CD4-positive, alpha-beta T cell (primary cell): ENCODE measurements at regions of chr11 and their contacts with region 1.

Region 1: GRCh38 chr11:120579611-120580031 is 68.1 kb downstream of the GRIK4 start:
- DNase-seq: no peak
- ATAC-seq: no peak
- H3K4me3 ChIP-seq: no peak overlapping the region
- H3K4me3 Mint-ChIP-seq: no peak overlapping the region
- H3K27ac ChIP-seq: no peak overlapping the region
- H3K27ac Mint-ChIP-seq: no peak overlapping the region
- H3K4me1 ChIP-seq: no peaks in the 10 kb centered on the region
- H3K4me1 Mint-ChIP-seq: no peaks in the 10 kb centered on the region
- H3K27me3 ChIP-seq: peaks cover 0 to 5% of the 10 kb centered on the region in 2 experiments
- H3K27me3 Mint-ChIP-seq: peaks cover 49% of the 10 kb centered on the region
- CTCF ChIP-seq: no peak

Region 2: DNA sequence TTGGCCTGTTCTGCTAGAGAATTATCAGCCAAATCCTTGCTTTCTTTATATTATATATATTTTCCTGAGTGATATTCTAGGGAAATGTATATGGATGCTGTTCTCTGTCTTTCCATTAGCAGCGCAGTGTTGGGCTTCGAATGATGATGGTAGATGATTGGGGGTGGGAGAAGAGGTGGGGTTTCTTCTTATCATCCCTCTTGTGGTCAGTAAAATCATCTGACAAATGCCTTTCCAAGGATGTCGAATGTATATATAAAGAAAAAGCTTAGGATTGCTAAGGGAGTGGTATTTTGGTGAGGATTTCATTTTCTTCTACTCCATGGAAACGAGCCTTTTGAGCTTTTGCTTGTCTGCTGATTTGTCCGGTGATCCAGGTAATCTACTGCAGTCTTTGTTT is 194.5 kb before region 1 on chr11:
- CTCF ChIA-PET with region 1: no interaction called
- POLR2A ChIA-PET with region 1: no interaction called
- intact Hi-C with region 1: loop called in 1 of 2 experiments (anchors 10 kb)
- DNase-seq: no peak
- ATAC-seq: no peak
- H3K4me3 ChIP-seq: no peak overlapping the region
- H3K4me3 Mint-ChIP-seq: no peak overlapping the region
- H3K27ac ChIP-seq: no peak overlapping the region
- H3K27ac Mint-ChIP-seq: no peak overlapping the region
- H3K4me1 ChIP-seq: no peaks in the 10 kb centered on the region
- H3K4me1 Mint-ChIP-seq: no peaks in the 10 kb centered on the region
- H3K27me3 ChIP-seq: peaks cover 0 to 25% of the 10 kb centered on the region in 2 experiments
- H3K27me3 Mint-ChIP-seq: peaks cover 80% of the 10 kb centered on the region
- CTCF ChIP-seq: no peak

Region 3: DNA sequence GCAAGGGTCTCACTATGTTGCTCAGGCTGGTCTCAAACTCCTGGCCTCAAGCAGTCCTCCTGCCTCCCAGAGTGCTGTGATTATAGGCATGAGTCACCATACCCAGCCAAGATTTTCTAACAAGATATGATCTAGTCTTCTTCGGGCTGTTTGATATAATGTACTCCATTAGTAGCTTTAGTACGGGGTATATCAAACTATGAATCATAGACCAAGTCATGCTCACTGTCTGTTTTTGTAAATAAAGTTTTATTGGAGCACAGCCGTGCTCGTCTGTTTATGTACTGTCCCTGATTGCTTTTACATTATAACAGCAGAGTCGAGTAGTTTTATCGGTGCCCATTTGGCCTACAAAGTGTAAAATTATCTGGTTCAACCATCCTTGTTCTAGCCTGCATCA is 112.0 kb before region 1 on chr11:
- CTCF ChIA-PET with region 1: no interaction called
- POLR2A ChIA-PET with region 1: no interaction called
- intact Hi-C with region 1: no loop called
- DNase-seq: no peak
- ATAC-seq: no peak
- H3K4me3 ChIP-seq: no peak overlapping the region
- H3K4me3 Mint-ChIP-seq: no peak overlapping the region
- H3K27ac ChIP-seq: no peak overlapping the region
- H3K27ac Mint-ChIP-seq: no peak overlapping the region
- H3K4me1 ChIP-seq: no peaks in the 10 kb centered on the region
- H3K4me1 Mint-ChIP-seq: no peaks in the 10 kb centered on the region
- H3K27me3 ChIP-seq: no peaks in the 10 kb centered on the region
- H3K27me3 Mint-ChIP-seq: no peaks in the 10 kb centered on the region
- CTCF ChIP-seq: no peak

Region 4: DNA sequence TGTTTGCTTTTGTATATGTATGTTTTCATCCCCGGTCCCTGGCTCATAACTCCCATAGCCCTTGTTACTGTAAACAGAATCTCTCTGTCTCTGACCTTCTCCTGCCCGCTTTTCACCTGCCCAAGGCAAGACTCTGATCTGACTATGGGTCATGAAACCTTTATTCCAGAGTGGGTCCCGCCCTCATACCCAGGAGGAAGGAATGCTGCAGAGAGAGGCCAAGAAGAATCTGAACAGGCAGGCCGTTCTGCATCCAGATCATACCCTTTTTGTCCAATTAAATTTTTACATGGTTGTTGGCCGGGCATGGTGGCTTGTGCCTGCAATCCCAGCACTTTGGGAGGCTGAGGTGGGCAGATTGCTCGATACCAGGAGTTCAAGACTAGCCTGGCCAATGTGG is 28.4 kb before region 1 on chr11:
- CTCF ChIA-PET with region 1: no interaction called
- POLR2A ChIA-PET with region 1: no interaction called
- intact Hi-C with region 1: no loop called
- DNase-seq: no peak
- ATAC-seq: no peak
- H3K4me3 ChIP-seq: no peak overlapping the region
- H3K4me3 Mint-ChIP-seq: no peak overlapping the region
- H3K27ac ChIP-seq: no peak overlapping the region
- H3K27ac Mint-ChIP-seq: no peak overlapping the region
- H3K4me1 ChIP-seq: no peaks in the 10 kb centered on the region
- H3K4me1 Mint-ChIP-seq: no peaks in the 10 kb centered on the region
- H3K27me3 ChIP-seq: peaks cover 2 to 5% of the 10 kb centered on the region in 2 experiments
- H3K27me3 Mint-ChIP-seq: peaks cover 30% of the 10 kb centered on the region
- CTCF ChIP-seq: no peak

Region 5: DNA sequence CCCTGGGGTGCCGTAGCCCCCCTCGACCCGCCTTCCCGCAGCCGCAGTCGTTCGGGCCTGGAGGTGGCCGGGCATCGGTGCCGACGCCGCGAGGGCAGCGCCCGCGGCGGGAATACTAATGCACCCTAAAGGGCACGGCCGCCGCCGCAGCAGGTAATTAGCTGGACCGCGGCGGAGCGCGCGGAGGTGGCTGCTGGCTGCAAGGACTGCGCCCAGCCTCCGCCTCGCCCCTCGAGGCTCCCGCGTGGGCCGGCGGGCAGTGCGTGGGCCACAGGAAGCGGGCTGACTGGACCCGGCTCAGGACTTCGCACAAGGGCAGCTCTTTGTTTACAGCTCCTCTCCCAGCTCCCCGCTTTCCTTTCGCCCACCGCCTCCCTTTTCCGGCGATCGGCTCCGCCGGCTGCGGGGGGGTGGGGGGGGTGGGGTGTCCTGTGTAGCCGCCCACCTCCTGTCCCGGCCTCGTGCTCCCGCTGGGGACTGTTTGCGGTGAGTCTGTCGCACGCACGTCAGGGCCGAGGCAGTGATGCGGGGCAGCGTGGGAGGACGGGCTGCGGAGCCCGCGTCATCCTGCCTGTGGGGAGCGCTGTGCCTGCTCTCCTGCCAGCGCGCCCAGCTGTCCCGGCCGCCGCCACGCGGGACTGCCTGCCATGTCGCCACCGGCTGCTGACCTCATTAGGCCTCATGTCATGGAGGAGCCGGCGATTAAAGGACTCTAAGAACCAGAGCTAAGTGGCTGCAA is 14.9 kb before region 1 on chr11:
- CTCF ChIA-PET with region 1: no interaction called
- POLR2A ChIA-PET with region 1: no interaction called
- intact Hi-C with region 1: no loop called
- DNase-seq: peak in 1 of 14 experiments; percentile 20
- ATAC-seq: no peak
- H3K4me3 ChIP-seq: no peak overlapping the region
- H3K4me3 Mint-ChIP-seq: no peak overlapping the region
- H3K27ac ChIP-seq: no peak overlapping the region
- H3K27ac Mint-ChIP-seq: no peak overlapping the region
- H3K4me1 ChIP-seq: peaks cover 2% of the 10 kb centered on the region
- H3K4me1 Mint-ChIP-seq: peaks cover 4% of the 10 kb centered on the region
- H3K27me3 ChIP-seq: peaks cover 23 to 52% of the 10 kb centered on the region in 2 experiments
- H3K27me3 Mint-ChIP-seq: peaks cover 72% of the 10 kb centered on the region
- CTCF ChIP-seq: no peak